Transverse colon (tissue), 4 donors: ENCODE measurements at regions of chr11 and their contacts with region 1.

Region 1: DNA sequence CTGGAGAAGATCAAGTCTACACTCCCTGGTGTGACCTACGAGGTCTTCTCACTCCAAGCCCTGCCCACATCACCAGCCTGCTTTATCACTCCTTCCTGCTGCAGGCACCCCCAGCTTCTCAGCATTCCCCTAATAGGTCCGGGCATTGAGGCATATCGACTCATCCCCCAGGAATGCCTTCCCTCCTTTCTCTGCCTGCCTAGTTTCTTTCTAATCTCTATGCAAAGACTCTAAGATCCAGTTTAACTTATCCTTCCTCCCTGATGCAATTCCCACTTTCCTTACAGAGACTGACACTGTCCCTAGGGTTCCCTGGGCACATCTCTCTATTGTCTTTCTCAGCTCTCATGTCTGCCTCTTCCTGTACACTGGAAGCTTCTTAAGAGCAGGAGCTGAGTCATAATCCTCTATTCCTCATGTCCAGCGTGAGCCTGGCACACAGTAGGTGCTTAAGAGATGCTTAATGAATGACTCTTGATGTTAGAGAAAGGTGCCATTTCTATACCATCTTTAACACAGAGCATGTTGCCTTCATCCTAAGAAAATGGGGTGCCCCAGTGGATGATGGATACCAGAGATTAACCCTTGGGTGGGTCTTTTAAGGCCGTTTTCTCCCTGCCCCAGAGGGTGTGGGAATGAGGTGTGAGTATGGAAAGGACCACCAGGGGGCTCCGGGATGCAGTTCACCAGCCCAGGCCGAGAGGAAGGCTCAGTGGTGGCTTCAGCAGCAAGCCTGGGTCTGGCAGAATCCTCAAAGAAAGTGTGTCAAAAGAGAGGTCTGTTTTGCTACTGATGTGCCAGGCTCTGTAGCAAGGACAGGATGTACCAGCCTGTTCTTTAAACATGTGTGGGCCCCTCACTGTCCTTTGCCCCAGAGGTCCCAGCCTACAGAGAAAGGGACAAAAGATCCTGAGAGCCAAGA is 34.7 kb downstream of the PARVA start:
- DNase-seq: peak; percentile 69
- H3K4me3 ChIP-seq: no peak overlapping the region
- H3K27ac ChIP-seq: peak overlapping the region; percentile 82 to 99 (median 92)
- H3K4me1 ChIP-seq: peaks cover 12 to 59% (median 24%) of the 10 kb centered on the region in 4 donors
- H3K27me3 ChIP-seq: no peaks in the 10 kb centered on the region
- CTCF ChIP-seq: peak; percentile 58 to 83 (median 66)
- EP300 ChIP-seq: peak; percentile 86
- POLR2A ChIP-seq: no peak

Region 2: DNA sequence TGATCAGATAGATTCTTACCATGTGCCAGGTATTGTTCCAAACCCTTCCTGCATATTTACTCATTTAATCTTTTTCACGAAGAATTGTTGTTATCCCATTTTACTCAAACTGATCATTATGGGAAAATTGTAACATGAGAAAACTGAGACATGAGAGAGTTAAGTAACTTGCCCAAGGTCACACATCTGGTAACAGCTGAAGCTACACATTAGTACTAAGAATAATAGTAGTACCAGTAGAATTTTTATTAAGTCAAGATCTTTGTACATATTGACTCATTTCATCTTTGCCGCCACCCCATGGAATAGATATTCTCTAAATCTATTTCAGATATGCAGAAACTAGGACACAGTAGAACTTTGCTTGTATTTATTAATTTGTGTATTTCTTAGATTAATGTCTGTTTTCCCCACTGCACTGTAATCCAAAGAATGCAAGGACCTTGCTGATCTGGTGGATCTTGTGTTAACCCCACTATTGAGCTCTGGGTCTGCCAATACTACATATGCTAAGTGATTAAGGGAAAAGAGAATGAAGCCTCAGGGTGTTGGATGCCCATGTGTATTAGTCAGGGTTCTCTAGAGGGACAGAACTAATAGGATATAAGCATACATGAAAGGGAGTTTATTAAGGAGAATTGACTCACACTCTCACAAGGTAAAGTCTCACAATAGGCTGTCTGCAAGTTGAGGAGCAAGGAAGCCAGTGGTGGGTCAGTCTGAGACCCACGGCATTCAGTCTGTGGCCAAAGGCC is 38.1 kb after region 1 on chr11:
- in situ Hi-C with region 1: no loop called
- intact Hi-C with region 1: loop called (anchors 10 kb)
- DNase-seq: no peak
- H3K4me3 ChIP-seq: no peak overlapping the region
- H3K27ac ChIP-seq: peak overlapping the region in 1 of 4 donors; percentile 13
- H3K4me1 ChIP-seq: peaks cover 0 to 12% (median 7%) of the 10 kb centered on the region in 4 donors
- H3K27me3 ChIP-seq: no peaks in the 10 kb centered on the region
- CTCF ChIP-seq: no peak
- EP300 ChIP-seq: no peak
- POLR2A ChIP-seq: no peak

Region 3: GRCh38 chr11:12587333-12587991 is 175.4 kb after region 1 on chr11:
- in situ Hi-C with region 1: no loop called
- intact Hi-C with region 1: no loop called
- DNase-seq: no peak
- H3K4me3 ChIP-seq: no peak overlapping the region
- H3K27ac ChIP-seq: no peak overlapping the region
- H3K4me1 ChIP-seq: peaks cover 0 to 6% (median 0%) of the 10 kb centered on the region in 4 donors
- H3K27me3 ChIP-seq: no peaks in the 10 kb centered on the region
- CTCF ChIP-seq: no peak
- EP300 ChIP-seq: no peak
- POLR2A ChIP-seq: no peak

Region 4: GRCh38 chr11:12893787-12894672 is 482.0 kb after region 1 on chr11:
- in situ Hi-C with region 1: loop called in 2 of 4 experiments (anchors 10 to 25 kb)
- intact Hi-C with region 1: loop called (anchors 5 kb)
- DNase-seq: peak; percentile 74
- H3K4me3 ChIP-seq: no peak overlapping the region
- H3K27ac ChIP-seq: peak overlapping the region; percentile 17 to 74 (median 52)
- H3K4me1 ChIP-seq: peaks cover 3 to 31% (median 15%) of the 10 kb centered on the region in 4 donors
- H3K27me3 ChIP-seq: no peaks in the 10 kb centered on the region
- CTCF ChIP-seq: peak; percentile 86 to 94 (median 91)
- EP300 ChIP-seq: no peak
- POLR2A ChIP-seq: no peak